Activated naive CD4-positive, alpha-beta T cell treated with anti-CD3 and anti-CD28 coated beads for 36 hours (primary cell): ENCODE measurements at regions of chr3 and their contacts with region 1.

Region 1: GRCh38 chr3:125202197-125202596 is 10.4 kb downstream of the SLC12A8 start:
- DNase-seq: peak; percentile 42
- H3K4me3 Mint-ChIP-seq: no peak overlapping the region
- H3K27ac Mint-ChIP-seq: no peak overlapping the region
- H3K4me1 Mint-ChIP-seq: no peaks in the 10 kb centered on the region
- H3K27me3 Mint-ChIP-seq: peaks cover 3% of the 10 kb centered on the region

Region 2: DNA sequence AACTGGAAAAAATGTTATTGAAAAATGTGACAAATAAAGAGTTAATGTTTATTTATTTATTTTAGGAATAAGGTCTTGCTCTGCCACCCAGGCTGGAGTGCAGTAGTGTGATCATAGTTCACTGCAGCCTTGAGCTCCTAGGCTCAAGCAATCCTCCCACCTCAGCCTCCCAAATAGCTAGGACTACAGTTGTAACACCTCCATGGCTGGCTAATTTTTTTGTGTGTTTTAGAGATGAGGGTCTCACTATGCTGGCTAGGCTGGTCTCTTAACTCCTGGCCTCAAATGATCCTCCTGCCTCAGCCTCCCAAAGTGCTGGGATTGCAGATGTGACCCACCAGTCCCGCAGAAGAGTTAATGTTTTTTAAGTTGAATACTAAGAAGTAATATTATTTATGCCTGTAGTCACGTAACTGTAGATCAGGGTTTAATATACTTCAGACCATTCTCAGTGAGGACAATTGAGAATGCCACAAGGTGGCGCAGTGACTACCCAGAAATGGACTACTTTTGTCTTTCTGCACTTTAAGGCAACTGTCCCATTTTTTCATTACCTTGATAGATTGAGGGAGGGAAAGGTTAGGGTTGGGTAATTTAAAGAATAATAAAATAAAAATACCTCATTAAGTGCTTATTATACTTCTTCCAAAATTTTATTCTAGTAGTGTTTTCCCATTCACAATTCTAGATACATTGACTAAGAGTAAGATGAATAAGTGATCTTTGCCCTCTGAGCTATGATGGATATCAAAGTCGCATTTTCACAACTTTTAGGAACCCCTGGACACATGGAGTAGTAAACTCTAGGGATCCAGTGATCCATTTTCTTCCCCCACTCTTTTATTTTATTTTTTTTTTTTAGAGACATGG is 273.6 kb before region 1 on chr3:
- CTCF ChIA-PET with region 1: interaction called, 3 read pairs
- intact Hi-C with region 1: loop called (anchors 1 kb)
- DNase-seq: peak; percentile 82
- H3K4me3 Mint-ChIP-seq: no peak overlapping the region
- H3K27ac Mint-ChIP-seq: no peak overlapping the region
- H3K4me1 Mint-ChIP-seq: no peaks in the 10 kb centered on the region
- H3K27me3 Mint-ChIP-seq: peaks cover 3% of the 10 kb centered on the region

Region 3: DNA sequence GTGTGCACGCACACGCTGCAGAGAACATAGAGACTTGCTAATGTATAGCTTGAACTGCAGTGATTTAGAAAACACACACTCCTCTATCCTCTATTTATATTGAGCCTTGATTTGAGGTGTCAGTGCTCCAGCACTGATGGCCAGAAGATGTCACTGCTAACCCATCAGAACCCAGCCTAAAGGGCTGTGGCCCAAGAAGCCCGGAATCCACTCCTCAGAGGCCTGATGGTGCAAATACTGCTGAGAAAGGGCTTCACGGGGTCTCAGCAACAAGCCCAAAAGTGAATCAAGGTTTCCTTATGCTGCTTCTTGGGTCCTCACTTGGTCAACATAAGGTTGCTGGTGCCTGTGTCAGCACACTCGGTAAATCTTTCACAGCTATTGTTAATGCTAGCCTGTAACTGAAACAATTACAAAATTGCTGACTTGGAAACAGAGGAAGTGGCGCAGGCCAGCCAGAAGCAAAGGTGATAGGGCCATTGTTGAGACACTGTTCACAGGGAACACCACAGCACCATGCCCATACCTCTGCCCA is 206.7 kb before region 1 on chr3:
- CTCF ChIA-PET with region 1: interaction called, 5 read pairs
- intact Hi-C with region 1: loop called (anchors 1 kb)
- DNase-seq: peak; percentile 72
- H3K4me3 Mint-ChIP-seq: no peak overlapping the region
- H3K27ac Mint-ChIP-seq: peak overlapping the region; percentile 24
- H3K4me1 Mint-ChIP-seq: peaks cover 3% of the 10 kb centered on the region
- H3K27me3 Mint-ChIP-seq: no peaks in the 10 kb centered on the region

Region 4: GRCh38 chr3:125683067-125683829 is 481.1 kb after region 1 on chr3:
- CTCF ChIA-PET with region 1: no interaction called
- intact Hi-C with region 1: no loop called
- DNase-seq: no peak
- H3K4me3 Mint-ChIP-seq: no peak overlapping the region
- H3K27ac Mint-ChIP-seq: no peak overlapping the region
- H3K4me1 Mint-ChIP-seq: no peaks in the 10 kb centered on the region
- H3K27me3 Mint-ChIP-seq: peaks cover 1% of the 10 kb centered on the region